ENCODE measurements at regions of chr1 and their contacts with region 1.

Region 1: GRCh38 chr1:239516579-239516978 is 130.2 kb downstream of the CHRM3 start:
- H3K4me3 ChIP-seq: no peak overlapping the region
- H3K27ac ChIP-seq: no peak overlapping the region
- H3K4me1 ChIP-seq: no peaks in the 10 kb centered on the region
- CTCF ChIP-seq: no peak

Region 2: GRCh38 chr1:239212811-239213220 is 303.8 kb before region 1 on chr1:
- CTCF ChIA-PET with region 1: no interaction called
- POLR2A ChIA-PET with region 1: no interaction called
- H3K4me3 ChIP-seq: no peak overlapping the region
- H3K27ac ChIP-seq: no peak overlapping the region
- H3K4me1 ChIP-seq: no peaks in the 10 kb centered on the region
- CTCF ChIP-seq: no peak

Region 3: GRCh38 chr1:239250353-239251035 is 266.1 kb before region 1 on chr1:
- CTCF ChIA-PET with region 1: no interaction called
- POLR2A ChIA-PET with region 1: no interaction called
- H3K4me3 ChIP-seq: no peak overlapping the region
- H3K27ac ChIP-seq: no peak overlapping the region
- H3K4me1 ChIP-seq: no peaks in the 10 kb centered on the region
- CTCF ChIP-seq: no peak

Region 4: DNA sequence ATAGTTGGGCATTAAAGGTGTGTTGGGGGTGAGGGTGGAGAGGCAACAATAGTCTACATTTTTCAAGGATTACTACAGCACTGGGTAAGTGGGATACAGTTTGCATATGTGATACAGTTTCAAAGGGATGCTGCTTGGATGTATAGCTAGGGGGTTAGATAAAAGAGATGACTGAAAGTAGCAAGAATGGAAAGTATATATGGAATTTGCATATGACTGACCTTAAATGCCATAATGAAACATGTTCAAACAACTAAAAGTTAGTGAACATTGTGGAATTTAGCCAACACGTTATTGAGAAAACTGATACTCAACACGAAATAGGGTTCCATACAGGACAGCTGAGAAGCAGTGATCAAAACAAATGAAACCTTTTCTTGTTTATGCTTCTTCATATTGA is 255.1 kb before region 1 on chr1:
- CTCF ChIA-PET with region 1: no interaction called
- POLR2A ChIA-PET with region 1: interaction called, 10 read pairs
- H3K4me3 ChIP-seq: no peak overlapping the region
- H3K27ac ChIP-seq: no peak overlapping the region
- H3K4me1 ChIP-seq: no peaks in the 10 kb centered on the region
- CTCF ChIP-seq: no peak

Region 5: GRCh38 chr1:239547987-239548386 is 31.4 kb after region 1 on chr1:
- CTCF ChIA-PET with region 1: no interaction called
- POLR2A ChIA-PET with region 1: no interaction called
- H3K4me3 ChIP-seq: no peak overlapping the region
- H3K27ac ChIP-seq: no peak overlapping the region
- H3K4me1 ChIP-seq: no peaks in the 10 kb centered on the region
- CTCF ChIP-seq: no peak

Measured in HEK293 (cell line).